Activated CD8-positive, alpha-beta T cell treated with anti-CD3 and anti-CD28 coated beads for 36 hours (primary cell): ENCODE measurements at regions of chr15 and their contacts with region 1.

Region 1: GRCh38 chr15:26891448-26892181 is 24.8 kb downstream of the GABRA5 start:
- DNase-seq: peak; percentile 71
- ATAC-seq: peak; percentile 49
- H3K4me3 Mint-ChIP-seq: no peak overlapping the region
- H3K27ac Mint-ChIP-seq: no peak overlapping the region
- H3K4me1 Mint-ChIP-seq: no peaks in the 10 kb centered on the region
- H3K27me3 Mint-ChIP-seq: peaks cover 14% of the 10 kb centered on the region
- CTCF ChIP-seq: peak; percentile 73

Region 2: GRCh38 chr15:26879706-26880105 is 11.9 kb before region 1 on chr15:
- CTCF ChIA-PET with region 1: interaction called, 10 read pairs
- POLR2A ChIA-PET with region 1: no interaction called
- intact Hi-C with region 1: no loop called
- DNase-seq: no peak
- ATAC-seq: no peak
- H3K4me3 Mint-ChIP-seq: no peak overlapping the region
- H3K27ac Mint-ChIP-seq: no peak overlapping the region
- H3K4me1 Mint-ChIP-seq: no peaks in the 10 kb centered on the region
- H3K27me3 Mint-ChIP-seq: no peaks in the 10 kb centered on the region
- CTCF ChIP-seq: no peak

Region 3: DNA sequence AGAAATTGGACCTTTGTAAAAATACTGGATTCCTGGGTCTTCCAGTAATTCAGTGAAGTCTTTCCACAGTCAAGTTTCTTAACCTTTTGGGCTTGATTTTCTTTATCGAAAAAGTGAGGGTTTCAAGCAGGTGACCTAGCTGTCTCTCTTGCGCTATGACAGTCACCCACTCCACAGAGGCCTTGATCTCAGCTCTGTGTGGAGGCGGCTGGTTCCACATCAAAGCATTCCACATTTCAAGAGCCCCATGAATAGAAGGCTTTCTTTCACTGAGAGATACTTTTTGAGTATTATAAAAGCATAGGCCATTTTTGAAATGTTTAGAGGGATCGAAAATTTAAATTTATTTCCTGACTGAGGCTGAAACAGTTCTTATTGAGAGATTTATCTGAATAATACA is 19.1 kb after region 1 on chr15:
- CTCF ChIA-PET with region 1: no interaction called
- POLR2A ChIA-PET with region 1: no interaction called
- intact Hi-C with region 1: no loop called
- DNase-seq: no peak
- ATAC-seq: no peak
- H3K4me3 Mint-ChIP-seq: no peak overlapping the region
- H3K27ac Mint-ChIP-seq: no peak overlapping the region
- H3K4me1 Mint-ChIP-seq: no peaks in the 10 kb centered on the region
- H3K27me3 Mint-ChIP-seq: no peaks in the 10 kb centered on the region
- CTCF ChIP-seq: no peak

Region 4: DNA sequence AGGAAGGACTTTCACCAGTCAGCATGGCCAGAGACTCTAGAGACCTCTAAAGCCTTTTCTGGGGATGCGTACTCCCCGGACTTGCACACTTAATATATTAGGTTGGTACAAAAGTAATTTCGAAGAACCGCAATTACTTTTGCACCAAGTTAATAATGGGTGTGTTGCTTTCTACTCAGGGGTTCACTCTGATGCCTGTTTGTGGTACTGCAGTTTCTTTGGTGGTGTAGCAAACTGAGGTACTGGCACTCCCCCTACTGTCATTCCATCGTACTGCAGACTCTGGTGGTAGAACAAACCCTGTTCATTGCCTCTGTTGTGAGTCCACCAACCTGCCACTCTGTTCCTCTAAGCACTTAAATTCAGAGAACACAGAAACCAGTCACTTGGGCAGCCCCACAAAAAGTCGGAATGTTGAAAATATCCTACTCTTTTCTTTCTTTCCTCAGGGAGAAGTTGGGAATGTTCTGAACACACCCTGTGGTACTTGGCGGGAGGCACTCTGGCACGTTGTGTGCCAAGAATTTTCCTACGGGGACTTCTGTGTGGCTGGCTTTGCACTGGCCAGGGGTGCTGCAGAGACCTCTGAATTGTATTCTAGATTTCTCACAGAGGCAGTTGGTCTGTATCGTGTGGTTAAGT is 125.7 kb after region 1 on chr15:
- CTCF ChIA-PET with region 1: interaction called, 12 read pairs
- POLR2A ChIA-PET with region 1: no interaction called
- intact Hi-C with region 1: loop called (anchors 5 kb)
- DNase-seq: peak; percentile 64
- ATAC-seq: no peak
- H3K4me3 Mint-ChIP-seq: no peak overlapping the region
- H3K27ac Mint-ChIP-seq: no peak overlapping the region
- H3K4me1 Mint-ChIP-seq: no peaks in the 10 kb centered on the region
- H3K27me3 Mint-ChIP-seq: no peaks in the 10 kb centered on the region
- CTCF ChIP-seq: peak; percentile 60

Region 5: GRCh38 chr15:27358751-27359434 is 467.3 kb after region 1 on chr15:
- CTCF ChIA-PET with region 1: interaction called, 16 read pairs
- POLR2A ChIA-PET with region 1: no interaction called
- intact Hi-C with region 1: no loop called
- DNase-seq: peak; percentile 22
- ATAC-seq: no peak
- H3K4me3 Mint-ChIP-seq: no peak overlapping the region
- H3K27ac Mint-ChIP-seq: no peak overlapping the region
- H3K4me1 Mint-ChIP-seq: no peaks in the 10 kb centered on the region
- H3K27me3 Mint-ChIP-seq: no peaks in the 10 kb centered on the region
- CTCF ChIP-seq: peak; percentile 69